ENCODE measurements at regions of chr1 and their contacts with region 1.

Region 1: GRCh38 chr1:65254319-65255034 is 54.9 kb upstream of the DNAJC6 start:
- DNase-seq: peak; percentile 74
- H3K4me3 Mint-ChIP-seq: peak overlapping the region; percentile 74
- H3K27ac Mint-ChIP-seq: peak overlapping the region; percentile 7
- H3K4me1 Mint-ChIP-seq: peaks cover 18% of the 10 kb centered on the region
- H3K27me3 Mint-ChIP-seq: no peaks in the 10 kb centered on the region
- CTCF ChIP-seq: no peak

Region 2: DNA sequence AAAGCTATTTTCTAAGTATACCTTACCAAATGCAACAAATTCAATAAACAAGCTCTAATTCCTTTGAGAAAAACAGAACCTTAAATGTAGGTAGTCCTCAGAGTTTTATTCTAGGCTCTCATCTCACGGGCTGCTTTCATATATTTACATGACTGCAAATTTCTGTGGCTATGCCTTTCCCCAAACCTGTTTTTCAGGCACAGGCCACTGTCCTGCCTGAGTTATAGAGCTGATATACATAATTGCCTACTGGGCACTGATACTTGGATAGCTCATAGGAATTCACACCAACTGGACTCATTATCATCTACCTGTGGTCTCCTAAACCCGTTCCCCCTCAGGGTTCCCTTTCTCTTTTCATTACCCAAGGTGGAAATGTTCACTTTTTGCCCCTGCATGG is 530.7 kb before region 1 on chr1:
- CTCF ChIA-PET with region 1: no interaction called
- POLR2A ChIA-PET with region 1: no interaction called
- intact Hi-C with region 1: no loop called
- DNase-seq: no peak
- H3K4me3 Mint-ChIP-seq: no peak overlapping the region
- H3K27ac Mint-ChIP-seq: no peak overlapping the region
- H3K4me1 Mint-ChIP-seq: no peaks in the 10 kb centered on the region
- H3K27me3 Mint-ChIP-seq: peaks cover 33% of the 10 kb centered on the region
- CTCF ChIP-seq: no peak

Region 3: GRCh38 chr1:65067491-65068201 is 186.8 kb before region 1 on chr1:
- CTCF ChIA-PET with region 1: no interaction called
- POLR2A ChIA-PET with region 1: interaction called, 10 read pairs
- intact Hi-C with region 1: no loop called
- DNase-seq: peak; percentile 70
- H3K4me3 Mint-ChIP-seq: peak overlapping the region; percentile 77
- H3K27ac Mint-ChIP-seq: peak overlapping the region; percentile 92
- H3K4me1 Mint-ChIP-seq: peaks cover 13% of the 10 kb centered on the region
- H3K27me3 Mint-ChIP-seq: no peaks in the 10 kb centered on the region
- CTCF ChIP-seq: no peak

Region 4: DNA sequence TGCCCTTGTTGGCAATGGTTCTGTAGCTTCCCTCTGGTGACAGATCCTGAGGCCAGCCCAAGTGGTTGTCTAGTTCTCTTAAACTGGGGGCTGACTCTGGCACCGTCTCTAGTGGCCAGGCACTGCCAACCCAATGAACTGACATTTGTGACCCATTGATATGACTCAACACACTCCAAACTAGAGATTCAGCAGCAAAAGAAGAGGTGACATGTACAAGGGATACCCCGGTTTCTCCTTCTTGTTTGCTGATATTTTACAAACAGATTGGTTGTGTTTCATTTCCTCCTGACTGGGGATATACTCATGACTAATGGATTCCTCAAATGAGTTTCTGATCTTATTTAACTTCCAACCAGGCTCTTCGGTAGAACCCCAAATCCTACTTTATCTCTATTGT is 11.0 kb before region 1 on chr1:
- CTCF ChIA-PET with region 1: interaction called, 5 read pairs
- POLR2A ChIA-PET with region 1: interaction called, 11 read pairs
- intact Hi-C with region 1: no loop called
- DNase-seq: no peak
- H3K4me3 Mint-ChIP-seq: no peak overlapping the region
- H3K27ac Mint-ChIP-seq: no peak overlapping the region
- H3K4me1 Mint-ChIP-seq: peaks cover 11% of the 10 kb centered on the region
- H3K27me3 Mint-ChIP-seq: no peaks in the 10 kb centered on the region
- CTCF ChIP-seq: no peak

Region 5: DNA sequence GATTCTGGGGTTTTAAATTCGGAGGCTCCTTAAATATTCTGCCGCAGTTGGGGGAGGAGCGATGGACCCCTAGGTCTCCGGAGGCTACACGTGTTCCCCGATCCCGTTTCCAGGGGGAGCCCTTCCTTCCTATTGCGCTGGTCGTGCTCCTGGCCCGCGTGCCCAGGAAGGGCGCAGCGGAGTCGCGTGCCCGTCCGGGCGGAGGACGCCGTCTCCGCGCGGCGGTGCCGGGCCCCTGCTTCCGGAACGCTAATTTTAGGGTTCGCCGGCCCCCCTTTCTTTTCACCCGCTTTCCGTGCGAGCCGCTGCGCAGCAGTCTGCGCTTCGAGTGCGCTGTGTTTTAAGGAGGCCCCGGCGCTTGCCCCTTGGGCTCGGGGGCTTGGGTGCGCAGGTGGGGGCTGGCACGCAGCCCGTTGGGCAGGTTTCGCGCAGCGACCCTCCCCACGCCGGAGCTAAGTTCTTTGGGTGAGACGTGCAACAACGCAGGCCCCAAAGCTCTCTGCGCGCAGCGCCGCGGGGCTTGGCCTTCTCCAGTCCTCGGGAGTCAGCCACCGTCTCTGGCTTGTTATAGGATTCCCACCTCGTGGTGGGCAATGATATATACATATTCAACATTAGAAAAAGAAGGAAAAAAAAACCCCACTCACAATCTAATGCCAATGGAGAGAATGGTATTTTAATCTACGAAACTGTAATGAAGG is 11.3 kb after region 1 on chr1:
- CTCF ChIA-PET with region 1: interaction called, 5 read pairs
- POLR2A ChIA-PET with region 1: interaction called, 49 read pairs
- intact Hi-C with region 1: no loop called
- DNase-seq: peak; percentile 42
- H3K4me3 Mint-ChIP-seq: peak overlapping the region; percentile 60
- H3K27ac Mint-ChIP-seq: no peak overlapping the region
- H3K4me1 Mint-ChIP-seq: peaks cover 9% of the 10 kb centered on the region
- H3K27me3 Mint-ChIP-seq: no peaks in the 10 kb centered on the region
- CTCF ChIP-seq: no peak

Region 6: GRCh38 chr1:65339866-65340468 is 85.5 kb after region 1 on chr1:
- CTCF ChIA-PET with region 1: interaction called, 3 read pairs
- POLR2A ChIA-PET with region 1: interaction called, 6 read pairs
- intact Hi-C with region 1: loop called (anchors 1 kb)
- DNase-seq: peak; percentile 55
- H3K4me3 Mint-ChIP-seq: no peak overlapping the region
- H3K27ac Mint-ChIP-seq: no peak overlapping the region
- H3K4me1 Mint-ChIP-seq: peaks cover 23% of the 10 kb centered on the region
- H3K27me3 Mint-ChIP-seq: no peaks in the 10 kb centered on the region
- CTCF ChIP-seq: no peak

Measured in MCF 10A (cell line).